ENCODE measurements at regions of chr18 and their contacts with region 1.

Region 1: GRCh38 chr18:45324495-45325113 is 290.7 kb upstream of the SLC14A2 start:
- DNase-seq: no peak

Region 2: DNA sequence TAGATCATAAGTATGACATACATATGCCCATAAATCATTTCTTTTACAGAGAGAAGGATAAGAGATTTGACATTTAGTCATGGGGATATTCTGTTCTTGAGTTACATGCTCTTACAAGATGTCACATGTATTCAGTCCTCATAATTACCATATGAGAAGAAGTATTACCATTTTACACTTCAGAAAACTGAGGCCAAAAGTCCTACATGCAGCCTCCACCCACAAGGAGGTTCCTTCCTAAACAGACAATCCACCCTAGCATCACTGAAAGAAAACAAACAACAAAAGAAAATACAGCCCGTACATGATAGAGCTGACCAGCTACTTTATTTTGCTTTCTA is 308.8 kb before region 1 on chr18:
- intact Hi-C with region 1: loop called (anchors 5 kb)
- DNase-seq: no peak

Region 3: DNA sequence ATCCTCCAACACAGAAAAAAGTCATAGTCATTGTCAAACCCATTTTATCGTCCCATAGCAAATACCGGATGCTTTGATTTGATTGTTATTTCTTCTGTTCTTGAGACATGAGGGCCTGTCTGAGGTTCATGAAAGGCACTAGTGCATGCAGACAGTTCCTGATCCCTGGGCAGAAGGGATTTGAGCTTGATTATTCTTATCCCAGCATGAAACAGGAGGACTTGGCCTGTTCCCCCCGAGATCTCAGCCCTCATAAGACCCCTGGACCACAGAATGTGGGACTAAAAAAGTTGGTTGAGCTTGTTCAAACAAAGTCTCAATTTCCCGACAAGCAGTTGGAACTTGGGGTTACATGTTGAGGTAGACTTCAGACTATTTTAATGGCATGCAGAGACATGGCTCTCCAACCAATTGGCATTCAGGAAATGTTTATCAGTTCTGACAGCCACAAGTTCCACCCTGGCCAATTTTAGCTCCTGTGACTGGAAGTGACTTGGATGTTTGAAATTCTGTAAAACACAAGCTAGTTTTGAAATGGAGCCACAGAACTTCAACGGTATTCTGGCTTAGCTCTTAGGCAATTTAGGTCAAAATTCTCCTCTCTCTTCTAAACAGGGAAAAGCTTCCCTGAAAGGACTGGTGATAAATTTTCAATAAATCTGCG is 76.2 kb before region 1 on chr18:
- intact Hi-C with region 1: loop called (anchors 5 kb)
- DNase-seq: no peak

Region 4: DNA sequence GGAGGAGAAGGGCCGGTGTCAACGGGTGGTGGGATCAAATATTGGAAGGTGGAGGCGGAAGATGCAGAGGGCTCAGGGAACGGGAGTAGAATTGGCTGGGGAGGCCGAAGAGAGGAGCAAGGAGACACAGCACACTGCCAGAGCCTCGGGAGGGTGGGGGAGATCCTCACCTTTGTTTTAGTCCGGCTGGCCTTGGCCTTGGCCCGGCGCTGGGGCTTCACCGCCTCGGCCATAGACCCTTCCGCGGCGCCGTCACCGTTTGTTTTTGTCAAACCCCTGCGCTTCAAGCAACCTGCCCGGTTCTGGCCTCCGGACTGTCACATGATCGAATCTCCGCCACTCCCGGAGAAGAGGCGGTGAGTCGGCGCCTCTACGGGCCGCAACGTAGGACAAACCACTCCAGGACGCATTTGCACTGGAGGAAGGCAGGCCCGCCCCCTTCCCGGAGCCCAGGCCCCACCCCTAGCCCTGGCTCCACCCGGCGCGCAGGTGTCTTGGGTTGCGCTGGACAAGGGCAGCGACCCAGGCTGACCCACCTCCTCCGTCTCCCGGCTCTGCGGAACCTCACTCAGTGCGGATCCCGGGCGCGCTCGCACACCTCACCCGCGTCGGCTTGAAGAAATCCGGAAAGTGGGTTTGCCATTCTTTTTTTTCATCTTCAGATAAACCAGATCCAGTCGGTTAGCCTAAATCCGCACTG is 642.6 kb after region 1 on chr18 and contains the start of gene EPG5:
- intact Hi-C with region 1: no loop called
- DNase-seq: peak; percentile 98
- total RNA-seq, gene EPG5: 16.7 TPM